Mammary epithelial cell (primary cell): ENCODE measurements at regions of chr9 and their contacts with region 1.

Region 1: GRCh38 chr9:129028192-129028957 is at the start of gene SH3GLB2:
- DNase-seq: peak; percentile 86
- H3K4me3 ChIP-seq: peak within 1 kb of the TSS; percentile 43 to 86 (median 79)
- H3K27ac ChIP-seq: peak within 1 kb of the TSS; percentile 37
- H3K4me1 ChIP-seq: peaks cover 27% of the 10 kb centered on the region
- H3K27me3 ChIP-seq: no peaks in the 10 kb centered on the region
- CTCF ChIP-seq: peak; percentile 71 to 86
- total RNA-seq, gene SH3GLB2: 48.0 to 54.5 TPM

Region 2: DNA sequence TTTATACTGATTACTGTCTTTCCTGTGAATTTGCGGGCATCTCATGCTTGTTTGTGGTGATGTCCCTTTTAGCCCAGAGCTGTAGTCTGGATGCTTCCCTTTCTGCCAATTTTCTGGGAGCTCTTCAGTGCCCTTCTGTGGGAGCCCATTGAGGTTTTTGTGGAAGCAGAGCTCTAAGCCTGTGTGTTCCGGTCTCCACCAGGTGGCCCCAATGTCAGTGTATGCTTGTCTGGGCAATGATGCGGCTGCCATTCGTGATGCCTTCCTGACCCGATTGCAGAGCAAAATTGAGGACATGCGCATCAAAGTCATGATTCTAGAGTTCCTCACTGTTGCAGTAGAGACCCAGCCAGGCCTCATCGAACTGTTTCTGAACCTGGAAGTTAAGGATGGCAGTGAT is 35.4 kb before region 1 on chr9:
- CTCF ChIA-PET with region 1: no interaction called
- dilution Hi-C with region 1: no loop called
- in situ Hi-C with region 1: no loop called
- intact Hi-C with region 1: loop called (anchors 2 kb)
- DNase-seq: peak; percentile 44
- H3K4me3 ChIP-seq: no peak overlapping the region
- H3K27ac ChIP-seq: no peak overlapping the region
- H3K4me1 ChIP-seq: peaks cover 15% of the 10 kb centered on the region
- H3K27me3 ChIP-seq: no peaks in the 10 kb centered on the region
- CTCF ChIP-seq: peak; percentile 39 to 78